ENCODE measurements at regions of chr15 and their contacts with region 1.

Region 1: DNA sequence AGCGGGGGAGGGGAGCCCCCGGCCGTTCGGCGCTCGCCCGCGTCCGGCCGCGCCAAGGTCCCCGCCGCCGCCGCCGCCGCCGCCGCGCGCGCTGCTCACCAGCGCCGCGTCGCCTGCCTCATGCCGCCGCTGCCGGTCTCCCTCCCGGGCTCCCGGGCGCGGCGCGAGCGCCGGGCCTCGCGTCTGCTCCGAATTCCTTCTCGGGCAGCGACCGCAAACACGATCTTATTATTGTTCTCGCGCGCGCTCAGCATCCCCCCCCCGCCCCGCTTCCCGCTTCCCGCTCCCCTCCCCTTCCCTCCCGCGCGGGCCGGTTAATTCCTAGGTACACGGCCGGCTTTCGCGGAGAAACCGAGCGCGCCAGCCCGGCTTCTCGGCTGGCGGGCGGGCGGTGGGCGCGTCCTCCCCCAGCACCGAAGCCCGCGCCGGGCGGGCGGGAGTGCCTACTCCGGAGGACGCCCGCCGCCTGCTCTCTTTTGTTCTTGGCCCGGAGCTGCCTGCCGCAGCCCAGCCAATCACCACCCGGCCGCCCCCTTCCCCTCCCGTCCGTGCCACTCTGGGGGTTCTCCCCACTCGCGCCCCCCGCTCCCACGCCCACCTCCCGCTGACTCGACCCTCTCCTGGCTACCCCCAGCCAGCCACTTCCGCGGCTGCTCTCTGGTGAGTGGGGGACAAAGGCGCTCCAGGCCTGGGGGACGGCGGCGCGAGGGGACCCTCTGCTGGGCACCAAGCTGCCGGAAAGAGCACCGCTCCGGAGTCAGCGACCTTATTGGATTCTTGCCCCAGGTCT is at the start of gene HDGFL3:
- DNase-seq: peak; percentile 83
- H3K4me3 Mint-ChIP-seq: peak within 1 kb of the TSS; percentile 90
- H3K27ac Mint-ChIP-seq: peak within 1 kb of the TSS; percentile 91
- H3K4me1 Mint-ChIP-seq: peaks cover 11% of the 10 kb centered on the region
- H3K27me3 Mint-ChIP-seq: peaks cover 28% of the 10 kb centered on the region
- total RNA-seq, gene HDGFL3: 34.6 and 38.7 TPM in 2 replicates

Region 2: DNA sequence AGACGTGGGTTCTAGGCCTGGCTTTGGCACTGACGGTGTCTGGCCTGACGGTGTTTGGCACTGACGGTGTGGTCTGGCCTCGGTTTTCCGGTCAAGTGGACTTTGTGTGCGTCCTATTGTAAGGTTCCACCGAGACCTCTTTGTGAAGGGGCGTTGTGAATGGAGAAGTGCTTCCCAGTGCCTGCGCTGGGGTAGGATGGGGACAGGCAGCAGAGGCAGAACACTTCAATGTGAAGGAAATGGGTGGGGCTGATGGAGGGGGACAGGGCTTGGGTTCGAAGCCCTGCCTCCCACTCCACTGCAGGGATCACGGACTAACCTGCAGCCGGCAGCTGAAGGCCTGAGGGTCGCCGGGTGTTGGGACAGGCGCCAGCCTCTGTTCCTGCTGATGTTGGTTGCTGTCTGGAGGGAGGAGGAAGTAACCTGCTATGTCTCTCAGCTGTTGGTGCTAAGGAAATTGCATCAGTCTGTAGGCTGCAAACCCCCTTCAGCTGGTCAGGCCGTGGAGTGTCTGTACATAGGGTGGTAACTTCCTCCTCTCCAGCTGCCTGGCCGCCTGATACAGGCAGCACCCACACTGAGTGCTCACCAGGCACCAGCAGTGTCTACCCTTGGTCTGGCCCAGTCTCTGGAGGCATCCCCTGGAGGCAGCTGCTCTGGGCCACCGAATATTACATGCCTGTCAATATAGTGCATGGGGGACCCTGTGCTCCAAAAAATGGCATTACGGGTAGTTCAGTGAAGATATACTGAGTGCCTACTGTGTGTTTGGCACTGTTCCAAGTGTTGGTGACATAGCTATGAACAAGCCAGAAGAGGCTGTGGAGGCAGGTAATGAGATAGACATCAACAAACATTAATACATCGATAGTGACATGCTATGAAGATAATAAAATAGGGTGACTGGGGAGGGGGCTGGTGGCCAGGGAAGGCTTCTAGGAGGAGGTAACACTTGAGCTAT is 99.3 kb before region 1 on chr15:
- intact Hi-C with region 1: loop called (anchors 2 kb)
- DNase-seq: peak; percentile 81
- H3K4me3 Mint-ChIP-seq: peak overlapping the region; percentile 89
- H3K27ac Mint-ChIP-seq: peak overlapping the region; percentile 54
- H3K4me1 Mint-ChIP-seq: peaks cover 40% of the 10 kb centered on the region
- H3K27me3 Mint-ChIP-seq: peaks cover 23% of the 10 kb centered on the region

Region 3: GRCh38 chr15:83356501-83357399 is 148.9 kb after region 1 on chr15:
- intact Hi-C with region 1: no loop called
- DNase-seq: no peak
- H3K4me3 Mint-ChIP-seq: no peak overlapping the region
- H3K27ac Mint-ChIP-seq: no peak overlapping the region
- H3K4me1 Mint-ChIP-seq: no peaks in the 10 kb centered on the region
- H3K27me3 Mint-ChIP-seq: peaks cover 5% of the 10 kb centered on the region

Region 4: GRCh38 chr15:83928392-83928734 is 720.5 kb after region 1 on chr15:
- intact Hi-C with region 1: loop called (anchors 10 kb)
- DNase-seq: no peak
- H3K4me3 Mint-ChIP-seq: peak overlapping the region; percentile 58
- H3K27ac Mint-ChIP-seq: peak overlapping the region; percentile 86
- H3K4me1 Mint-ChIP-seq: peaks cover 20% of the 10 kb centered on the region
- H3K27me3 Mint-ChIP-seq: peaks cover 7% of the 10 kb centered on the region

Measured in activated CD4-positive, alpha-beta T cell treated with anti-CD3 and anti-CD28 coated beads, Interleukin-2, amount 10 ng/mL, durations not matched to agents 24 days and 14 days (primary cell).